Testis (tissue), 5 donors: ENCODE measurements at regions of chr6 and their contacts with region 1.

Region 1: DNA sequence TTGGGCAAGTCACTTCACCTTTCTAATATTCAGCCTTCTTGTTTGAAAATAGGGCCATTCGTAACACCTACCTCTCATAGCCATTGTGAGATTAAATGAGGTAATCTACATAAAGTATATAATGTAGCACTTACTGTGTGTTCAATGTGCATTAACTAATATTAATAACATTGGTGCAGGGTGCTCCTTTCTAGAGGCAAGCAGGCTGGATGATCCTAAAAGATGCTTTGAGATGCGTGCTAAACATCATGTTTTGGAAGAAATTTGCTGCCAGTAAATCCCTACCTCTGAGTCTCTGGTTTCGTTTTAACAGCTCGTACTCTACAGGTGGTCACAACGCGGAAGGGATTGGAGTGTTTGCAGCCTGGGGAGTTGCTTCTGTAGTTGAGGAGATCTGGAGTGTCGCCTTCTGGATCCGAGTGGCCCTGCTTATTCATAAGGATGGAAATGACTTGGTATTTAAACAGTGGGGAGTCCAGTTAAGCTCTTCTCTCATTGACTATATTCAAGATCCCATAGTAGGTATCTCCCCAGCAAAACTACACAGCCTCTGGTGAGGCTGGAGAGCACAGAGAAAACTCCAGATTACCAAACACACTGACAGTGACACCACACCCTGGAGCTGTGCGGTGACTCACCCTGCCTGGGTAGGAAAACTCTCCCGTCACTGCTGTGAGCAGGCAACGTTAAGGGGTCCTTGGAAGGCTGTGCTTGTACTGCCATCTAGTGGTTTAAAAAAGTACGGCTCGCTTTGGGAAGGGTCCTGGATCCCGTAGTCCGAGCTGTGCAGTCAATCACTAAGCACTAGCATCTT is 107.9 kb downstream of the MAP3K7 start:
- DNase-seq: peak; percentile 91
- H3K4me3 ChIP-seq: no peak overlapping the region
- H3K27ac ChIP-seq: no peak overlapping the region
- H3K4me1 ChIP-seq: no peaks in the 10 kb centered on the region
- H3K27me3 ChIP-seq: no peaks in the 10 kb centered on the region
- CTCF ChIP-seq: peak; percentile 88
- POLR2A ChIP-seq: no peak

Region 2: DNA sequence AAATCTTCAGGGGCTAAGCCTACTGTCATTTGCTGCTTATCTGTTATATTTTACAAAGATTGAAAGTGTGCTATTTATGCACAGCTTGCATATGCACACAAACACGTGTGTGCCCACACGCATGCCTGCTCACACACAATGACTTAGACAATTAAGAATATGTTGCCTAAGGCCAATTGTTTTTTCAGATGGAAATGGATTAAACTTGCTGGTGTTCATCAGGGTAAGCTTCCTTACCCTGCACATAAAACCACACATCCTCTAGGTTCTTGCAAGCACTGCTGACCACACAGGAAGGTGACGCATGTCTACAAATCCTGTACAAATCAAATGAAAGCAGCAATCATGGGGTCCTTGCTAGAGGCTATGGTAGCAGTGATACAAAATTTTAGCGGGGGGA is 526.3 kb before region 1 on chr6:
- intact Hi-C with region 1: loop called (anchors 10 kb)
- DNase-seq: no peak
- H3K4me3 ChIP-seq: no peak overlapping the region
- H3K27ac ChIP-seq: no peak overlapping the region
- H3K4me1 ChIP-seq: no peaks in the 10 kb centered on the region
- H3K27me3 ChIP-seq: no peaks in the 10 kb centered on the region
- CTCF ChIP-seq: no peak
- POLR2A ChIP-seq: no peak

Region 3: DNA sequence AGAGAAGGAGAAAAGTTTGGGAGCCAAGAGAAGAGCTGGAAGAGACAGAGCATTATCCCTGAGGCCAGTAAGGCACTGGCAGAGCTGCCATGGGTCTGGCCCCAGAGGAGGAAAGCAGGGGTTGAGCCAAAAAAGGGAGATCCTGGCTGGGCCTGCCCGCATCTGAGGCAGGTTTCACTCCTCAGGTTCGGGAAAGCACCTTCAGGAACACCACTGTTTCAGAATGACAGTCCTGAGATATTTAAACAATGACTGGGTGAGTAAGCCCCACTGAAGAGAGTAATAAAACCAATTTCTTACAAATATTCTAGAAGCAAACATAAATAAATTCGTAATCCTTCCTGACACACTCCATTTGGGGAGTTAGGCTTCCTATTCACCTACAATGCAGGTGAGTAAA is 334.6 kb before region 1 on chr6:
- intact Hi-C with region 1: no loop called
- DNase-seq: no peak
- H3K4me3 ChIP-seq: no peak overlapping the region
- H3K27ac ChIP-seq: no peak overlapping the region
- H3K4me1 ChIP-seq: no peaks in the 10 kb centered on the region
- H3K27me3 ChIP-seq: no peaks in the 10 kb centered on the region
- CTCF ChIP-seq: no peak
- POLR2A ChIP-seq: no peak